BJ (cell line): ENCODE measurements at regions of chr14 and their contacts with region 1.

Region 1: DNA sequence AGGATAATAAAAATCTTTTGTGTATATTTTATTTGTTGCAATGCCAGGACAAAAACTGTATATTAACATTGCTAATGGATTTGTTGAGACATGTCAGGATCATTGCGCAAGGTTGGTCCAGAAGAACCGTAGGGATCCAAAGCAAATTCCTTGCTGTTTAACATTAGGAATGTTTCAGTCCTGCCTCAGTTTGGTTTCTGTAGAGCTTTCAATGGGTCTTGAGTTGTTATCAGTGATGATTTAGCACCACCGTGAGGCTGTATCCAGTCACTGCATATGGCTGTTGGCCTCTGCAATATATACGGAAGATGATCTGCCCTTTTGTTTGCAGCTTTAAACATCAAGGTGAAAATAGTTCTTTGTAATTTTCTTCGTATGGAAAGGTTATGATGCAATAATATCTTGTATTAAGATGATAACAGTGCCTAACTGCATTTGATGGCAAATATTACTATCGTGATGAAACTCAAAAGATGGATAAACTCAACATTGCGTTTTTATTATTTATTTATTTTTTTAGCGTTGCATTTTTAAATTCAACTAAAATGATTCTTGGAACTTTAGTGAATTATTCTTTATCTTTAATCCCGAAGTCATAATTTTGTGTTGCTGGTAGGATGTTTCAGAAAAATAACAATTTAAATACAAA is 231.2 kb downstream of the AKAP6 start:
- DNase-seq: peak; percentile 58
- H3K4me3 ChIP-seq: no peak overlapping the region
- H3K27me3 ChIP-seq: no peaks in the 10 kb centered on the region
- CTCF ChIP-seq: peak; percentile 84

Region 2: GRCh38 chr14:32259368-32260013 is 300.8 kb before region 1 on chr14:
- CTCF ChIA-PET with region 1: interaction called, 27 read pairs
- POLR2A ChIA-PET with region 1: no interaction called
- DNase-seq: peak; percentile 46
- H3K4me3 ChIP-seq: no peak overlapping the region
- H3K27me3 ChIP-seq: no peaks in the 10 kb centered on the region
- CTCF ChIP-seq: no peak

Region 3: DNA sequence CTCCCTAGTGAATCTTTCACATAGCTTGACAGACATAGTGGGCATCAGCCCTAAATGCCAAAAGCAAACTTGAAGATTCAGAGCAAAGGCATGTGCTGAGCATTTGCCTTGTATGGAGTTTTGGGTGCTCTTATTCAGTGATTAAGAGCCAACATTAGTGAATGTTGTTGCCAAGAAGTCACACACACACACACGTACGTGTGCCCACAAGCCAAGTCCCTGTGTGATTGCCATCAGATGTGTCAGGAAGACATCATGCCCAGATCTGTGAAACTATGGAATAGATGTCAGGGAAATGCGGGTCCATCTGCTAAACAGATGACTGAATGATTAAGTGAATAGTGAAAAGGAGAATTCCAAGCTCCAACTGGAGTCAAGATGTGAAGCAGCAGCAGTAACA is 82.3 kb before region 1 on chr14:
- CTCF ChIA-PET with region 1: interaction called, 16 read pairs
- POLR2A ChIA-PET with region 1: interaction called, 3 read pairs
- DNase-seq: peak; percentile 45
- H3K4me3 ChIP-seq: no peak overlapping the region
- H3K27me3 ChIP-seq: no peaks in the 10 kb centered on the region
- CTCF ChIP-seq: no peak

Region 4: GRCh38 chr14:32576088-32576795 is 15.9 kb after region 1 on chr14:
- CTCF ChIA-PET with region 1: interaction called, 11 read pairs
- POLR2A ChIA-PET with region 1: no interaction called
- DNase-seq: no peak
- H3K4me3 ChIP-seq: no peak overlapping the region
- H3K27me3 ChIP-seq: no peaks in the 10 kb centered on the region
- CTCF ChIP-seq: peak; percentile 94

Region 5: DNA sequence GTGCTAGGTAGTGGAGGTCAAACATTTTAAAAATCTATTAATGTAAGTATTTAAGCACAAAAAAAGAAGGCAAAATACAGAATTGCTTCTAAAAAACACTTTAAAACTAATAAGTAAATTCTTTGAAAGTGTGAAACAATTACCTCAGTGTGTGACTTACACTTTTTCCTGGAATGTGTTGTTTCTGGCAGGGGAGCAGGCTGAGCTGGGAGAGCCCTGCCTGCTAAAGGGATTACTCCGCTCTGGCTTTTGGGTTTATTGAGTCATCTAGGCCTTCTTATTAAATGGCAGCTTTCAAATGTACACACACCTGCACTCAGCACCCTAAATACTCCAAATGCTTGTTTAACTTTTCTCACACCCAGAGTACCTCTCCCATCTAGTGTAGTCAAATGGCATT is 48.5 kb after region 1 on chr14:
- CTCF ChIA-PET with region 1: no interaction called
- POLR2A ChIA-PET with region 1: no interaction called
- DNase-seq: no peak
- H3K4me3 ChIP-seq: no peak overlapping the region
- H3K27me3 ChIP-seq: no peaks in the 10 kb centered on the region
- CTCF ChIP-seq: no peak